ENCODE measurements at regions of chr11 and their contacts with region 1.

Region 1: DNA sequence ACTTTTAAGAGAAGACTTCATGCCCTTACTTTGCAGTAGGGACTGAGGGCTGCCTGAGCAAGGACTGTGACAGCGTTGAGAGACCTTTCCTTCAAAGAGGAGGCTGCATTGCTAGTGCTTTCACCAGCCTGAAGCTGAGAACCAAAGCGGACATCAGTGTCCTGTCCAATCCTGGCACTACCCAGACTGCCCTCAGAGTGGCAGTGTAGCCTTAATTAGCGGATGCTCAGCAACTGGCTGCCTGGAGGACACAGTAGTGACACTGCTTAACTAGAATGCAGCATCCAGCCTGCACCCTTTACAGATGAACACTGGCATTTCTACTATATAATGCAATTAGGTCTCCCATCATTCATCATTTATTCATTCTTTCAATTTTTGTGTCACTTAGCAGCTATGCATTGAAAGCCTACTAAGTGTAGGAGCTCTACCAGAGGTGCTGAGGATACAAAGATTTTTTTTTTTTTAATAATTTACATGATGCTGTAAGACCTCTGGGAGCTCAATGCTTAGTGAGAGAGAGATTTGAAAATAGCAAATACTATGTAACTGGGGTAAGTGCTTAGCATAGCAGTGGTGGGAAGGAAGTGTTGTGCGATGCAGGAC is 36.9 kb upstream of the SLC36A4 start:
- ATAC-seq: peak; percentile 99 to 100 (median 100)
- H3K4me3 ChIP-seq: no peak overlapping the region
- H3K27ac ChIP-seq: no peak overlapping the region
- H3K4me1 ChIP-seq: peaks cover 3 to 5% of the 10 kb centered on the region in 2 donors

Region 2: GRCh38 chr11:93543292-93543977 is 308.7 kb after region 1 on chr11 and contains the start of gene SMCO4:
- in situ Hi-C with region 1: loop called in 1 of 9 experiments (anchors 25 kb)
- ATAC-seq: peak; percentile 83 to 97 (median 86)
- H3K4me3 ChIP-seq: peak within 1 kb of the TSS; percentile 61 to 91 (median 88)
- H3K27ac ChIP-seq: peak within 1 kb of the TSS in 1 of 2 donors; percentile 72
- H3K4me1 ChIP-seq: peaks cover 0 to 4% of the 10 kb centered on the region in 2 donors
- total RNA-seq, gene SMCO4: 1.1 to 19.2 (median 5.8) TPM

Region 3: GRCh38 chr11:93552874-93553273 is 318.2 kb after region 1 on chr11:
- in situ Hi-C with region 1: loop called in 2 of 9 experiments (anchors 10 to 25 kb)
- ATAC-seq: no peak
- H3K4me3 ChIP-seq: no peak overlapping the region
- H3K27ac ChIP-seq: no peak overlapping the region
- H3K4me1 ChIP-seq: no peaks in the 10 kb centered on the region

Region 4: DNA sequence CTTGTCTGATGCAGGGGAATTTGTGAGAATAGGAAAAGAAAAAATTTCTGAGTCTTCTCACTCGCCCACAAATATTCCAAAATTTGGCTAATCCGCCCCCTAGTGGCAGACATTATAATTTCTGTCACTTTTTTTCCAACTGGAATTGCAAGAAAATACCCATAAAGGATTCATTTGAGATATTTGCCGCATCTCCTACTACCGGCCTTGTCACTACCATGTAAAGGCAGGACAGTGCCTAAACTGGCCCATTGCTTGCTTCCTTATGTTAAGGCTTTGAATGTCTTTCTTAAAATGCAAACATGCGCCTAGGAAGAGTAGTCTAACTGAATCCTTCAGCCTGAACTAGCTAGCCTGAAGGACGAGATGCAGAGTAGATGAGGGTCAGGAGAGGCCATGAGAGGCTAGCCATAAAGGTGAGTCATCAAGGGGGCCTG is 417.5 kb after region 1 on chr11:
- in situ Hi-C with region 1: loop called in 7 of 9 experiments (anchors 10 to 25 kb)
- ATAC-seq: peak in 2 of 8 experiments; percentile 20 to 29
- H3K4me3 ChIP-seq: no peak overlapping the region
- H3K27ac ChIP-seq: no peak overlapping the region
- H3K4me1 ChIP-seq: no peaks in the 10 kb centered on the region

Measured in motor neuron (in vitro differentiated cells).